Activated CD8-positive, alpha-beta memory T cell treated with anti-CD3 and anti-CD28 coated beads, Interleukin-2, amount 10 ng/mL, durations not matched to agents 7 days and 5 days (primary cell): ENCODE measurements at regions of chr12 and their contacts with region 1.

Region 1: GRCh38 chr12:56521590-56522371 is at the start of gene RBMS2:
- DNase-seq: peak; percentile 71
- ATAC-seq: peak; percentile 93
- H3K4me3 Mint-ChIP-seq: peak within 1 kb of the TSS; percentile 77
- H3K27ac Mint-ChIP-seq: peak within 1 kb of the TSS; percentile 77
- H3K4me1 Mint-ChIP-seq: peaks cover 34% of the 10 kb centered on the region
- H3K27me3 Mint-ChIP-seq: no peaks in the 10 kb centered on the region
- total RNA-seq, gene RBMS2: 9.3 to 10.0 TPM

Region 2: DNA sequence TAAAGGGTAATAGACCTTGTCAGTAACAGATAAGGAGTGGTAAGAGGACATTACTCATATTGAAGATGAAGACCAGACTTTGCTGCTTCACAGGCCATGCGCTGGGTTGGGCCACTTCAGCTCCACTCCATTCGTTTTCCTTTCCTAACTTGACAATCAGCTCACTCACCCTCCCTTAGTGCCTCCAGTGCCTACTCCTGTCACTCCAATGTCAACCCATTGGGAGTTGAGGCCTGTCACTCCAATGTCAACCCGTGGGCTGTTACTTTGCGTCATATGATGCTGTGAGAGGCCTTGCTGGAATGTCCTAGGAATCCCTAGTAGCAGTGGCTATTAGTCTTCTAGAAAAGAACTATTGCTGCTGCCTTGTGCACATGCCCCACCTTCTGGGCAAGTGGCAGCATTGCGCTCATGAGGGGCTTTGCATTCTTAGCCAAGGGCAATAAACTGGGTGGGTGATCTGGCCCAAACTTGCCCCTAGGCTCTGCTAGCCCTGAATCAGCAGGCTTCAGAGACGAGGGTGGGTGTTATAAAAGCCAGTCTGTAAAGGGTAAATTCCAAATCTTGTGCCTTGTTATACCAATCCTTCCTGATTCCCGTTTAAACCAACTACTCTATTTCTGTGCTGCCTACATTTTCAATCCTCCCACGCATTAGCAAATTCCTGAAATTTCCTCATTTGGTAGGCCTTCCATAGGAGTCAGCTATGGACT is 72.3 kb after region 1 on chr12:
- CTCF ChIA-PET with region 1: interaction called, 14 read pairs
- DNase-seq: peak; percentile 79
- ATAC-seq: peak; percentile 66
- H3K4me3 Mint-ChIP-seq: no peak overlapping the region
- H3K27ac Mint-ChIP-seq: peak overlapping the region; percentile 43
- H3K4me1 Mint-ChIP-seq: peaks cover 2% of the 10 kb centered on the region
- H3K27me3 Mint-ChIP-seq: no peaks in the 10 kb centered on the region

Region 3: DNA sequence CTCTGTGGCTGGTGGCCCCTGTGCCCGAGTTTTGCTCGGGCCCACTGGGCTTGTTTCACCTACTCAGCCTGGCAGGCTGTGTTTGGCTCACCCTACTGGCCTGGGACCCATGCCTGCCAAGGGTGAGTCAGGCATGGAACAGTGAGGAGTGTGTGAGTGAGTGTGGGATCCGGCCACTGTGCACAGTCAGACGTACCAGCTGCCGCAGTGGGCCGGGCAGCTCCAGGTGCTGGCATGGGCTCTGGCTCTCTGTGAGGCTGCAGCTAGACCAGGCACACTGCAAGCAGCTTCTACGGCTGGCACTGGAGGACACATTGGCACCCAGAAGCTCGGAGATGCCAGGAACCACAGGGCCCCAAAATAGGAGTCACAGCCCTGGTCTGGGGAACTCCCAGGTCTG is 282.0 kb after region 1 on chr12:
- CTCF ChIA-PET with region 1: no interaction called
- DNase-seq: no peak
- ATAC-seq: no peak
- H3K4me3 Mint-ChIP-seq: no peak overlapping the region
- H3K27ac Mint-ChIP-seq: no peak overlapping the region
- H3K4me1 Mint-ChIP-seq: no peaks in the 10 kb centered on the region
- H3K27me3 Mint-ChIP-seq: no peaks in the 10 kb centered on the region